HepG2 (cell line): ENCODE measurements at regions of chr7 and their contacts with region 1.

Region 1: GRCh38 chr7:37916673-37917660 is at the start of gene SFRP4:
- DNase-seq: peak; percentile 76
- ATAC-seq: peak; percentile 68
- H3K4me3 ChIP-seq: peak within 1 kb of the TSS; percentile 72 to 82 (median 73)
- H3K27ac ChIP-seq: peak within 1 kb of the TSS; percentile 65
- H3K4me1 ChIP-seq: peaks cover 45% of the 10 kb centered on the region
- H3K27me3 ChIP-seq: no peaks in the 10 kb centered on the region
- CTCF ChIP-seq: peak; percentile 83
- EP300 ChIP-seq: 0 out of 4 replicates have a peak, but pooled peaks of 1 of the 2 experiments have one; percentile 4
- POLR2A ChIP-seq: no peak; a peak in 1 of 4 replicates
- RAD21 ChIP-seq: peak; percentile 61; the same call in 1 of the 2 replicates
- total RNA-seq, gene SFRP4: 1.2 and 1.8 TPM in 2 replicates

Region 2: GRCh38 chr7:37806152-37806551 is 110.8 kb before region 1 on chr7:
- CTCF ChIA-PET with region 1: no interaction called
- POLR2A ChIA-PET with region 1: no interaction called
- in situ Hi-C with region 1: no loop called
- intact Hi-C with region 1: no loop called
- DNase-seq: no peak
- ATAC-seq: no peak
- H3K4me3 ChIP-seq: no peak overlapping the region
- H3K27ac ChIP-seq: no peak overlapping the region
- H3K4me1 ChIP-seq: no peaks in the 10 kb centered on the region
- H3K27me3 ChIP-seq: no peaks in the 10 kb centered on the region
- CTCF ChIP-seq: no peak
- EP300 ChIP-seq: no peak
- POLR2A ChIP-seq: no peak
- RAD21 ChIP-seq: no peak

Region 3: GRCh38 chr7:37901236-37901827 is 15.6 kb before region 1 on chr7:
- CTCF ChIA-PET with region 1: interaction called, 5 read pairs
- POLR2A ChIA-PET with region 1: interaction called, 16 read pairs
- in situ Hi-C with region 1: no loop called
- intact Hi-C with region 1: loop called (anchors 2 kb)
- DNase-seq: peak; percentile 56
- ATAC-seq: peak; percentile 80
- H3K4me3 ChIP-seq: no peak overlapping the region
- H3K27ac ChIP-seq: no peak overlapping the region
- H3K4me1 ChIP-seq: peaks cover 29% of the 10 kb centered on the region
- H3K27me3 ChIP-seq: no peaks in the 10 kb centered on the region
- CTCF ChIP-seq: peak; percentile 70
- EP300 ChIP-seq: no peak
- POLR2A ChIP-seq: no peak
- RAD21 ChIP-seq: peak; percentile 37; the same call in 1 of the 2 replicates

Region 4: GRCh38 chr7:37942934-37943610 is 26.1 kb after region 1 on chr7:
- CTCF ChIA-PET with region 1: interaction called, 4 read pairs
- POLR2A ChIA-PET with region 1: interaction called, 68 read pairs
- in situ Hi-C with region 1: no loop called
- intact Hi-C with region 1: loop called (anchors 1 kb)
- DNase-seq: peak; percentile 100
- ATAC-seq: peak; percentile 97
- H3K4me3 ChIP-seq: peak overlapping the region; percentile 22 to 44 (median 32); a peak in 4 of 6 replicates
- H3K27ac ChIP-seq: peak overlapping the region; percentile 99
- H3K4me1 ChIP-seq: peaks cover 74% of the 10 kb centered on the region
- H3K27me3 ChIP-seq: no peaks in the 10 kb centered on the region
- CTCF ChIP-seq: peak; percentile 61
- EP300 ChIP-seq: peak; percentile 97
- POLR2A ChIP-seq: peak; percentile 58 to 91; a peak in 3 of 4 replicates
- RAD21 ChIP-seq: peak; percentile 75; the same call in 1 of the 2 replicates

Region 5: GRCh38 chr7:37987732-37988131 is 70.8 kb after region 1 on chr7:
- CTCF ChIA-PET with region 1: no interaction called
- POLR2A ChIA-PET with region 1: no interaction called
- in situ Hi-C with region 1: no loop called
- intact Hi-C with region 1: no loop called
- DNase-seq: no peak
- ATAC-seq: no peak
- H3K4me3 ChIP-seq: no peak overlapping the region
- H3K27ac ChIP-seq: no peak overlapping the region
- H3K4me1 ChIP-seq: no peaks in the 10 kb centered on the region
- H3K27me3 ChIP-seq: peaks cover 0 to 2% of the 10 kb centered on the region in 2 experiments; a peak in 1 of 5 replicates
- CTCF ChIP-seq: no peak
- EP300 ChIP-seq: no peak
- POLR2A ChIP-seq: no peak
- RAD21 ChIP-seq: no peak

Region 6: GRCh38 chr7:38107486-38107893 is 190.5 kb after region 1 on chr7:
- CTCF ChIA-PET with region 1: interaction called, 5 read pairs
- POLR2A ChIA-PET with region 1: no interaction called
- in situ Hi-C with region 1: no loop called
- intact Hi-C with region 1: loop called (anchors 1 kb)
- DNase-seq: peak; percentile 55
- ATAC-seq: peak; percentile 95
- H3K4me3 ChIP-seq: no peak overlapping the region
- H3K27ac ChIP-seq: no peak overlapping the region
- H3K4me1 ChIP-seq: no peaks in the 10 kb centered on the region
- H3K27me3 ChIP-seq: no peaks in the 10 kb centered on the region
- CTCF ChIP-seq: peak; percentile 86
- EP300 ChIP-seq: no peak
- POLR2A ChIP-seq: no peak
- RAD21 ChIP-seq: peak; percentile 60

Region 7: DNA sequence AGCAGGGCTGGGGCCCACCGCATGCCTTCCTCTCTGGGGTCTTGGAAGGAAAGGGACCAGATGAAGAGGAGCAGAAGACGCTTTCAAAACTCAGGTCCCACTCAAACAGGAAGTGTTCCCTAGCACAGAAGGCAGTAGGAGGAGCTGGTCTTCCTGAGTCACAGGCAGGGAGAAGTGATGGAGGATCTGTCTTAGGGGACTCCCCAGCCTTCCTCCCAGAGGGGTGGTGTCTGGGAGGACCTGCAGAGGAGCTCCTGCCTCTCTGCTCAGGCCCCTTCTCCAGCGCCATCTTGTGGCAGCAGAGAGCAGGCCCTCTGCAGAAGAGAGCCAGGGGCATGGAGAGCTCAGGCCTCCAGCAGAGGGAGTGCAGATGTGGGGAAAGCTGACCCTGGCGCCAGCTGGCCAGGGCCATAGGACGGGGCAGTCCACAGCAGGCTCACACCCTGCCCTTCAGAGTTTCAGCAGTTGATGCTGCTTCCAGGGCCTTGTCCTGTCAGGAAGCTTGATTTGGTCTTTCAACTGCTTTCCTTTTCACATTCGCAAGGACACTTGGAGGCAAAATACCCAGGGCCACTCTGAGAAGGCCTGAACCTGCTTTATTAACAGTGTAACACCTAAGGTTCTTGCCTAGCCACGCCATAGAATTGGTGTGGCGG is 418.7 kb after region 1 on chr7:
- CTCF ChIA-PET with region 1: no interaction called
- POLR2A ChIA-PET with region 1: no interaction called
- in situ Hi-C with region 1: loop called (anchors 25 kb)
- intact Hi-C with region 1: no loop called
- DNase-seq: peak; percentile 77
- ATAC-seq: peak; percentile 100
- H3K4me3 ChIP-seq: no peak overlapping the region
- H3K27ac ChIP-seq: no peak overlapping the region
- H3K4me1 ChIP-seq: no peaks in the 10 kb centered on the region
- H3K27me3 ChIP-seq: no peaks in the 10 kb centered on the region
- CTCF ChIP-seq: peak; percentile 97
- EP300 ChIP-seq: 0 out of 4 replicates have a peak, but pooled peaks of 1 of the 2 experiments have one; percentile 20
- POLR2A ChIP-seq: no peak
- RAD21 ChIP-seq: peak; percentile 36; the same call in 1 of the 2 replicates